ENCODE measurements at regions of chr22 and their contacts with region 1.

Region 1: DNA sequence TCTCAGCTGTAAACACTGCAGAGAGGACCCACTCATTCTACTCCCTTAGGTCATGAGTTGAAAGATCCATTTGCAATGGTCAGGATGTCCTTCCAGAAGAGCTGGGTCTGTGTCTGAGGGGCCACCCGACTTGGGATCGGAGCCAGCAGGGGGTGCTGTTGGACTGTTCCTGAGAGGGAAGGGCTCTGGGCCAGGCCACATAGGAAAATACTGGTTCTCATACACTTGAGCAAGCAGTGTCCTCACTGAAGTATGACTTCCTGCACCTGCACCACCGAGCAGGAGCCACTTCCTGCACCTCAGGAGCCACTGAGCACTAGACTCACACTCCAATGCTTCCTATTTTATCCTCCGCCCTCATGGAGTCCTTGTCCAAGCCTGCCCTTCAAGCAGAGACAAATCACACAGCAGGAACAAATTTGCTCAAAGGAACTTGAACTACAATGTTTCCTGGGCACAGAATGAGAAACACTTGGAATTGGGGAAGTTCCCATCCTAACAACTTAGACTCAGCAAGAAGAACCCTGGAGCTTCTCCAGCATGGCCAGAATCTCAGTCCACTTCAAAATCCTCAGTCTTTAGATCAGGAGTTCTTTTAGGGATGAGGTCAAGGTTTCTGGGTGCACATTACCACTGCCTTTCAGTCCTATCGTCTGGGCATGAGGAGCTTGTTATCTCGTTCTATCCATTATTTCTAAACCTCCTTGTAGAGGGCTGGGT is 36.6 kb upstream of the VPREB1 start:
- DNase-seq: peak; percentile 68
- H3K4me3 ChIP-seq: no peak overlapping the region
- H3K27ac ChIP-seq: no peak overlapping the region
- H3K4me1 ChIP-seq: peaks cover 11% of the 10 kb centered on the region
- H3K27me3 ChIP-seq: peaks cover 6 to 22% of the 10 kb centered on the region in 2 experiments
- CTCF ChIP-seq: peak; percentile 79 to 80
- POLR2A ChIP-seq: no peak

Region 2: DNA sequence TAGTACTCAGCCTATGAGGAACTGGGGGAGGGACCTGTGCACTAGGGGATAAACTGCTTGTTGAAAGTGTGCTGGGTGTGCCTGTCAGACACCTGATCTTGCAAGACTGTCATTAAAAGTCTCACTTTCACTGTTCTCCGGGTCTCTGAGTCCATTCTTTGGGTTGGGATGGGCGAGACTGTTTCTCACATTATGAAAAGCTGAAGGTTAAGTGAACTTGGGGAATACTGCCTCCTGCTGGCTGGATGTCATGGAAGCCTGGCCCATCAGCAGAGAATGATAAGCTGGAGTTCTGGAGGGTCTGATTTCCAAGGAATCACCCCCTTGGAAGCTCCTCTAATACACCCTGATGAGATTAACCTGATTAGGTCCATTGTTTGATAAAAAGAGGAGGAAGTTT is 27.6 kb after region 1 on chr22:
- CTCF ChIA-PET with region 1: interaction called, 53 read pairs
- POLR2A ChIA-PET with region 1: no interaction called
- dilution Hi-C with region 1: no loop called
- intact Hi-C with region 1: loop called (anchors 1 kb)
- DNase-seq: peak; percentile 22
- H3K4me3 ChIP-seq: no peak overlapping the region
- H3K27ac ChIP-seq: no peak overlapping the region
- H3K4me1 ChIP-seq: peaks cover 4% of the 10 kb centered on the region
- H3K27me3 ChIP-seq: no peaks in the 10 kb centered on the region
- CTCF ChIP-seq: peak; percentile 49 to 51
- POLR2A ChIP-seq: no peak

Region 3: GRCh38 chr22:22322792-22323191 is 114.8 kb after region 1 on chr22:
- CTCF ChIA-PET with region 1: interaction called, 11 read pairs
- POLR2A ChIA-PET with region 1: no interaction called
- dilution Hi-C with region 1: no loop called
- intact Hi-C with region 1: no loop called
- DNase-seq: no peak
- H3K4me3 ChIP-seq: no peak overlapping the region
- H3K27ac ChIP-seq: no peak overlapping the region
- H3K4me1 ChIP-seq: no peaks in the 10 kb centered on the region
- H3K27me3 ChIP-seq: no peaks in the 10 kb centered on the region
- CTCF ChIP-seq: no peak
- POLR2A ChIP-seq: no peak

Measured in endothelial cell of umbilical vein (primary cell).